CD14-positive monocyte (primary cell): ENCODE measurements at regions of chr17 and their contacts with region 1.

Region 1: DNA sequence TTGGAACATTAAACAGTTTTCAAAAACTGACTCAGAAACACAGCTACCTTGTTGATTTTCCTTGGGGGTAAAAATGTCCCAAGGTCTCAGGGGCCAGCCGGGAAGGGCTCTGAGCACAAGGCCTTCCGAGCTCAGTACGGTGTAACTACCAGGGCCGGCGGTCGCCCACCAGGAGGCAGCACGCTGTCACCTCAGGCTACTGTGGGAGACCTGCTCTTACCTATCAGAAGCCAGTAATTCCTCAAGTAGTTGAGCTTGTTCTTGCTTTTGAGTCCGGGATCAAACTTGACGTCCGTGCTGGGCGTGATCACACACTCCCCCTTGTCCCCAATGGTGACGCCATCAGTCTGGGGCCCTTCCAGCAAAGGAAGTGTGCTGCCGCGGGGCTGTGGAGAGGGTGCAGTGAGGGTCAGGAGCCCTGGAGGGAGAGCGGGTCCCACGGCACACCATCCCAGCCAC is 43.4 kb upstream of the ICAM2 start:
- DNase-seq: peak; percentile 58 to 73 (median 59)
- H3K4me3 ChIP-seq: peak overlapping the region in 1 of 3 experiments; percentile 39
- H3K4me3 Mint-ChIP-seq: peak overlapping the region in 1 of 2 donors; percentile 42
- H3K27ac ChIP-seq: peak overlapping the region; percentile 71 to 79
- H3K27ac Mint-ChIP-seq: peak overlapping the region; percentile 90 to 98 (median 92)
- H3K4me1 ChIP-seq: peaks cover 50 to 69% of the 10 kb centered on the region in 2 donors
- H3K4me1 Mint-ChIP-seq: peaks cover 73% of the 10 kb centered on the region
- H3K27me3 ChIP-seq: no peaks in the 10 kb centered on the region
- H3K27me3 Mint-ChIP-seq: no peaks in the 10 kb centered on the region
- CTCF ChIP-seq: peak; percentile 66

Region 2: DNA sequence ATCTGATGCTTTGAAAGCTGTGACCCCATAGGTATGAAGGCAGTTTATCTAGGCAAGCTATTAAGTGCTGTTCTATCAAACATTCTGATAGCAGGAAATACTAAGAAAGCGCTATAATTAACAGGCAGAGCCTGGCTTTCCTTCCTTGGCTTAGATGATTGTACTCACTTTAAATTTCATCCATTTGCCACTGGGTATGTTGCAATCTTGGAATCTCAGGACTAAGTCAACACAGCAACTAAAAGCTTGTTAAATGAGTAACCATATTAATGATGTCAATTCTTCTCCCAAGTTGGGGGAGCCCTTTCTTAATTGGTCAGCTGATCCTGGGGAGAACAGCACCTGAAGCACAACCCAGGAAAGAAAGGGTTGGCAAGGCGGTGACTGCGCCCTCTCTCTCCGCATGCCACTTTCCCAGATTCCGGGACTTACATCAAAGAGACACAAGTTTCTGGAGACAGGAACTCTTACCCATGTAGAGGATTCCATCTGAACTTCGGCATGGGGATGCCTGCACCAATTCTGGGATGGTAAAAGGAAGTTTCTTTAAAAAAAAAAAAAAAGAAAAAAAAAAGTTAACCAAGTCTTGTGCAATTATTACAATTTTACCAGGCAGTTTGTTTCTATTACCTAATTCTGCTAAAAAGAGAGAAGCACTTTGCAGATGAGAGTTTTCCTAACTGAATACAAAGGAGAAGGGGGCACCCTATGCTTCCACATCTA is 11.1 kb after region 1 on chr17:
- intact Hi-C with region 1: loop called in 1 of 2 experiments (anchors 2 kb)
- DNase-seq: peak in 2 of 3 donors; percentile 75 to 94
- H3K4me3 ChIP-seq: peak overlapping the region; percentile 18 to 68 (median 33)
- H3K4me3 Mint-ChIP-seq: peak overlapping the region; percentile 61 to 88
- H3K27ac ChIP-seq: peak overlapping the region; percentile 96 to 97
- H3K27ac Mint-ChIP-seq: peak overlapping the region; percentile 97 to 100 (median 99)
- H3K4me1 ChIP-seq: peaks cover 52 to 53% of the 10 kb centered on the region in 2 donors
- H3K4me1 Mint-ChIP-seq: peaks cover 49% of the 10 kb centered on the region
- H3K27me3 ChIP-seq: no peaks in the 10 kb centered on the region
- H3K27me3 Mint-ChIP-seq: peaks cover 0 to 1% (median 0%) of the 10 kb centered on the region in 3 donors
- CTCF ChIP-seq: no peak

Region 3: DNA sequence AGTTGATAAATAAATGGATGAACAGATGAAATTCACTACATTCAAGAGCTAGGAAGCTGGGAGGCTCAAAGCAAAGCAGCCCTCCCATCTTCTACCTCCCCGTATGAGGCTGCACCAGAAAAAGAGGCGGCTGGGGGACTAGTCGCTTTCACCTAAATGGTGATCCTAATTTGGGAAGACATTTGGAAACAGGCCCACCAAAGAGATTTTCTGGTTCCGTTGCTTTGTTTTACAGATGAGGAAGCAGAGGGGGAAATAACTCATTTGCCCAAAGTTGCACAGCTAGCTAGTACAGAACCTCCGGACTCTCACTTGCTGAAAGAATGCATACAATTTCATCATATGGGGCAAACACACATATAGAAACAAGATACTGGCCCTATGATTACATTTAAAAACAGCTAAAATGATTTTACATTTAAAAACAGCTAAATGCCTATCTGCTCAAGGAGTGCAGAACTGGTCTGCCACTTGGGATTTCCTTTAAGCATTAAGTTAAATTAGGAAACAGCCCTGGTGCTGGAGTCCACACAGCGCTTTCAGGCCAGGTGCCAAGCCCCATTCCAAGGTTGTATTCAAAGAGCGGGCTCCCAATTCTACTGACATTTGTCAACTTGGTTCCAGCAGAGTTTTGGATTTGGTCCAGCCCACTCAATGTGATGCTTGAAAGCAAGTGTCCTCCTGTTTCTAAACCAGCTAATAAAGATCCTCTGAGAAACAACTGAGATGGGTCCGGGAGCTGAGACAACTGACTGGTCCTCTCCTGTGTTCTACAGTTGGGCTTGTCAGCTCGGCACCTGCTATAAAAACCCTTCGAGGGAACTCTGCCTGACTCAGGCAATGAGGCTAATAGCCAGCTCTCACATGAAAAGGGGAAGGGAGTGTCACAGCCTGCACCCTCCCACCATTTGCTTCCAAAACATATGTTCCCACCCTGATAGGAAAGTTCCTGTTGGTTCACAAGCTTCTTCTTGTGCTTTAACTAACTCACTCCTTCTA is 54.5 kb after region 1 on chr17:
- intact Hi-C with region 1: loop called in 1 of 2 experiments (anchors 5 kb)
- DNase-seq: peak; percentile 69 to 82 (median 80)
- H3K4me3 ChIP-seq: peak overlapping the region in 2 of 3 experiments; percentile 27 to 63
- H3K4me3 Mint-ChIP-seq: peak overlapping the region; percentile 54 to 63
- H3K27ac ChIP-seq: peak overlapping the region; percentile 72 to 79
- H3K27ac Mint-ChIP-seq: peak overlapping the region; percentile 84 to 92 (median 91)
- H3K4me1 ChIP-seq: peaks cover 59 to 67% of the 10 kb centered on the region in 2 donors
- H3K4me1 Mint-ChIP-seq: peaks cover 61% of the 10 kb centered on the region
- H3K27me3 ChIP-seq: no peaks in the 10 kb centered on the region
- H3K27me3 Mint-ChIP-seq: peaks cover 0 to 3% (median 0%) of the 10 kb centered on the region in 3 donors
- CTCF ChIP-seq: no peak

Region 4: GRCh38 chr17:64171041-64171440 is 107.2 kb after region 1 on chr17:
- intact Hi-C with region 1: no loop called
- DNase-seq: no peak
- H3K4me3 ChIP-seq: no peak overlapping the region
- H3K4me3 Mint-ChIP-seq: no peak overlapping the region
- H3K27ac ChIP-seq: no peak overlapping the region
- H3K27ac Mint-ChIP-seq: peak overlapping the region in 2 of 7 donors; percentile 25 to 43
- H3K4me1 ChIP-seq: peaks cover 27 to 28% of the 10 kb centered on the region in 2 donors
- H3K4me1 Mint-ChIP-seq: peaks cover 25% of the 10 kb centered on the region
- H3K27me3 ChIP-seq: no peaks in the 10 kb centered on the region
- H3K27me3 Mint-ChIP-seq: peaks cover 0 to 2% (median 0%) of the 10 kb centered on the region in 3 donors
- CTCF ChIP-seq: no peak